GM12878 (cell line): ENCODE measurements at regions of chr13 and their contacts with region 1.

Region 1: GRCh38 chr13:23888658-23889614 is at the start of gene MIPEP:
- DNase-seq: peak; percentile 79
- ATAC-seq: peak; percentile 96
- H3K4me3 ChIP-seq: peak within 1 kb of the TSS; percentile 70
- H3K27ac ChIP-seq: peak within 1 kb of the TSS; percentile 69
- H3K4me1 ChIP-seq: no peaks in the 10 kb centered on the region
- H3K27me3 ChIP-seq: no peaks in the 10 kb centered on the region
- CTCF ChIP-seq: peak; percentile 83 to 91 (median 87)
- EP300 ChIP-seq: peak in 1 of 2 experiments; percentile 15; a peak in 1 of 4 replicates
- POLR2A ChIP-seq: peak; percentile 79
- RAD21 ChIP-seq: no peak
- polyA plus RNA-seq, gene MIPEP: 15.6 to 28.2 TPM

Region 2: DNA sequence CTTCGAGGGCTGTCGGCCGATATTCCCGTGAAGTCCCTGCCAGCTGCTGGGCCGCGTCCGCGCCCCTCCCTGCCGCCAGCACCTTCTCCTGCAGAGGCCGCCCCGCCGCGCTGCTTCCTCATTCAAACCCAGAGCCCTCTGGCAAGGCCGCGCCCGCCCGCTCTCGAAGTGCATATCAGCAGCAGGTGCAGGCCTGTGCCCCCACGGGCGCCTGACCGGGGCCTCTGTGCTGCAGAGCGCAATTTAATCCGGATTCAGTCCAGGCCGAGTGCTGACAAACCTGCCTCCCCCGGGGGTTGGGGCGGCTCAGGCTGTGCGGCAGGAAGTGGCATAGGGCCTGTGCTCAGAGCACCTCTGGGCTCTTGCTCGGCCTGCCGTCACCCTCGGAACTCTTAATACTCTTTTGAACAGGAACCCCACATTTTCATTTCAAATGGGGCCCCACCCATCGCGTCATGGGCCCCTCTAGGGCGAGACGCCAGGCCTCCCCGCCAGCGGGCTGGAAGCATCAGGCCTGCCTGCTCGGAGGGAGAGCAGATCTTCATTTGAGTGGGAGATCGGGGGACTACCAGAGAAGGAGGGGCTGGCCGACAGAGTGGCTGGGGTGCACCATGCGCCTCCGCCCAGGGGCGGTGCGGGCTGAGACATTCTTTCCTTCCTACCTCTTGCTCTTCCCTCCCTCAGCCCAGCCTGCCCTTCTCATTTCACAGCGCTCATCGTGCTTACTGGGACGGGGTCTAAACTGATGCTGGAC is 193.0 kb before region 1 on chr13:
- CTCF ChIA-PET with region 1: no interaction called
- POLR2A ChIA-PET with region 1: no interaction called
- RAD21 ChIA-PET with region 1: no interaction called
- SMC1A ChIA-PET with region 1: no interaction called
- in situ Hi-C with region 1: no loop called
- intact Hi-C with region 1: no loop called
- DNase-seq: no peak
- ATAC-seq: peak; percentile 86
- H3K4me3 ChIP-seq: no peak overlapping the region
- H3K27ac ChIP-seq: 0 out of 2 replicates have a peak overlapping the region, but pooled peaks have one; percentile 18
- H3K4me1 ChIP-seq: peaks cover 7% of the 10 kb centered on the region; the same call in 1 of the 2 replicates
- H3K27me3 ChIP-seq: no peaks in the 10 kb centered on the region
- CTCF ChIP-seq: no peak
- EP300 ChIP-seq: no peak
- POLR2A ChIP-seq: peak; percentile 56; the same call in 1 of the 2 replicates
- RAD21 ChIP-seq: no peak

Region 3: GRCh38 chr13:23851106-23851505 is 37.8 kb before region 1 on chr13:
- CTCF ChIA-PET with region 1: interaction called, 17 read pairs
- POLR2A ChIA-PET with region 1: no interaction called
- RAD21 ChIA-PET with region 1: interaction called, 5 read pairs
- SMC1A ChIA-PET with region 1: interaction called, 5 read pairs
- in situ Hi-C with region 1: no loop called
- intact Hi-C with region 1: no loop called
- DNase-seq: no peak
- ATAC-seq: no peak
- H3K4me3 ChIP-seq: no peak overlapping the region
- H3K27ac ChIP-seq: no peak overlapping the region
- H3K4me1 ChIP-seq: peaks cover 56% of the 10 kb centered on the region
- H3K27me3 ChIP-seq: no peaks in the 10 kb centered on the region
- CTCF ChIP-seq: no peak
- EP300 ChIP-seq: no peak
- POLR2A ChIP-seq: no peak
- RAD21 ChIP-seq: no peak

Region 4: DNA sequence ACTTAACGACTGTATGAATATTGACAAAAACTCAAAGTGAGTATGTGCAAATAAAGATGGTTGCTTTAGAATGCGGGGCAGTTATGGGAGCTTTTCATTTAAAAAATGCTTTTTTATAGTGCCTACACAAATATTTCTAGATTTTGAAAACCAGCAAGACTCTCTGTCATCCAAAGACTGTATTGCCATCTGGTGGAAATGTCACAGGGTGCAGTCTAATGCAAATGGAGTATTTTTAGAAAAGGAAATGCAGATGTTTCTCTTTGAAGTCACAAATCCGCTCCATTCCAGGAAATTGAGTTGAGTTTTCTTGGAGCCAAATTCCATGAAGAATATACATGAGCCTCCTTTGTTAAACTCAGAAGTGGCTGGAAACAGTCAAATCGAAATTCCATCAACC is 10.6 kb after region 1 on chr13:
- CTCF ChIA-PET with region 1: interaction called, 10 read pairs
- POLR2A ChIA-PET with region 1: interaction called, 5 read pairs
- RAD21 ChIA-PET with region 1: interaction called, 5 read pairs
- SMC1A ChIA-PET with region 1: no interaction called
- in situ Hi-C with region 1: no loop called
- intact Hi-C with region 1: no loop called
- DNase-seq: no peak
- ATAC-seq: peak; percentile 81
- H3K4me3 ChIP-seq: no peak overlapping the region
- H3K27ac ChIP-seq: no peak overlapping the region
- H3K4me1 ChIP-seq: no peaks in the 10 kb centered on the region
- H3K27me3 ChIP-seq: peaks cover 0 to 11% of the 10 kb centered on the region in 2 experiments; a peak in 2 of 4 replicates
- CTCF ChIP-seq: peak; percentile 53 to 59 (median 58)
- EP300 ChIP-seq: no peak
- POLR2A ChIP-seq: no peak
- RAD21 ChIP-seq: peak; percentile 75